ENCODE measurements at regions of chr22 and their contacts with region 1.

Region 1: GRCh38 chr22:37544955-37545699 is 15.2 kb upstream of the CDC42EP1 start:
- H3K4me3 Mint-ChIP-seq: no peak overlapping the region
- H3K27ac Mint-ChIP-seq: peak overlapping the region; percentile 43
- H3K4me1 Mint-ChIP-seq: peaks cover 48% of the 10 kb centered on the region
- H3K27me3 Mint-ChIP-seq: peaks cover 21% of the 10 kb centered on the region

Region 2: GRCh38 chr22:37561212-37562048 is 16.3 kb after region 1 on chr22:
- intact Hi-C with region 1: loop called (anchors 2 kb)
- H3K4me3 Mint-ChIP-seq: peak overlapping the region; percentile 80
- H3K27ac Mint-ChIP-seq: peak overlapping the region; percentile 75
- H3K4me1 Mint-ChIP-seq: peaks cover 70% of the 10 kb centered on the region
- H3K27me3 Mint-ChIP-seq: peaks cover 62% of the 10 kb centered on the region

Region 3: GRCh38 chr22:37591823-37592404 is 46.8 kb after region 1 on chr22:
- intact Hi-C with region 1: loop called (anchors 1 kb)
- H3K4me3 Mint-ChIP-seq: no peak overlapping the region
- H3K27ac Mint-ChIP-seq: peak overlapping the region; percentile 97
- H3K4me1 Mint-ChIP-seq: peaks cover 43% of the 10 kb centered on the region
- H3K27me3 Mint-ChIP-seq: peaks cover 4% of the 10 kb centered on the region